Left cardiac atrium (tissue), 4 donors: ENCODE measurements at regions of chr17 and their contacts with region 1.

Region 1: DNA sequence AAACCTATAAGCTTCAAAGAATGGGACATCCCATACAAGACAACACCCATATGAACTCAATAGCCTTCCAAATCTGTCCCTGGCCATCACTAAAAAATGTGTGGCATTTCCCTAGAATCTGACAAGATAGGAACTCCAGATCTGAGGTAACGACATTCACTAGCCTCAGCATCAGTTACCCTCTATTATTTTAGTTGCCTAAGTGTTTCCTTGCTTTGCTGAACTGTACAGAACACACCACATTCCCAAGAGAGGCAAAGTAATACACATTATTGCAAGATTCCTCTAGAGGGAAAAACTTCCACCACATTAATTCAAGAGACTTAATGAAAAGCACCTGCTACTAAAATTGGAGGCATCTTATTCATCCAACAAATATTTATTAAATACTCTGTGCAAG is 5.0 kb downstream of the LSM12 start:
- DNase-seq: no peak
- ATAC-seq: no peak

Region 2: DNA sequence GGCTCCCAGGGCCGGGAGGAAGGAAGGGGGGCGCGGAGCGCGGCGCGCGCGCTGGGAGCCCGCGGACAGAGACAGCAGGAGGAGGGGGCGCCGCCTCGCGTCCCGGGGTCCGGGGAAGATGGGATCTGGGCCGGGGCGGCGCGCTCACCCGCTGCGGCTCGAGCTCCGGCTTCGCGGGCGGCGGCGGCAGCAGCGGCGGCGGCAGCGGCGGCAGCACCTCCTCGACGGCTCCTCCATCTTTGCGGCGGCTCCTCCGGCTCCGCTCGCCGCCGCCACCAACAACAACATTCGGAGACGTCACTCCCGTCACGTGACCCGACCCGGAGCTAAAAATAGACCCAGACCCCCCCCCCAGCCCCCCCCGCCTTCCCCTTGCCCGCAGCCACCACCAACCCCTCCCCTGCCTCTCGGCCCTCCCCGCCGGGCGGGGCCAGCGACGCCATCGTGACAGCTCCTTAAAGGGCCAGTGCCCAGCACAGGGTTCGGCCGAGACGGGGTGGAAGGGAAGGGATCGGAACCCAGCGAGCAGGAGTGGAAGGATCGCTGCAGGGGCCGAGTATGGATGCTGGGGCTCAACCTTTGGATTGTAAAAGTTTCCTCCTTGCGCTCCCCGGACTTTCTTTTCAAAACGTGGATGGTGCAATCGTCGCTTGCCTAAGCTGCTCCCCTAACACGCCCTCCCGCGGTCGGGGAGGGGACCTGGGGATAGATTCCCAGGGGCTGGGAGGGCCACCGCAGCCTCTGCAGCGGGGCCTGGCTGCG is 62.1 kb after region 1 on chr17 and contains the start of gene HDAC5:
- intact Hi-C with region 1: loop called in 1 of 2 experiments (anchors 5 kb)
- DNase-seq: peak; percentile 96
- ATAC-seq: peak; percentile 98
- total RNA-seq, gene HDAC5: 39.2 to 57.9 TPM